ENCODE measurements at regions of chr9 and their contacts with region 1.

Region 1: DNA sequence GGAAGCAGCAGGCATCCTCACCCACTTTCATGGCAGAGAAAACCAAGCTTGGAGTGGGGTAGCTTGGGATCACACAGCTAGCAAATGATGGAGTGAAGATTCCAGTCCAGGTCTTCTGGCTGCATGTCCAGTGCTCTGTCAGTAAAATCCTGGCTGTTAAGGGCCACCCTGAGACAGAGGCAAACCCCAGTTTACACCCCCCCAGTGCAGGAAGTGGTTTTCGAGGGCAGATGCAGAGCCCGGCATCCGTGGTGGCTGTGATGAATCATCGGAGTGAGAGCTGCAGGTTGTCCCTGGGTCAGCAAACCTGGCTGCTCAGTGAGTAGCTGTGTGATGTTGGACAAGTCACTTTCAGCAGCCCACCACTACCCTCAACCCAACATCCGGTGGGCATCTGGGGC is 115.4 kb downstream of the RGS3 start:
- DNase-seq: peak; percentile 66
- ATAC-seq: no peak

Region 2: DNA sequence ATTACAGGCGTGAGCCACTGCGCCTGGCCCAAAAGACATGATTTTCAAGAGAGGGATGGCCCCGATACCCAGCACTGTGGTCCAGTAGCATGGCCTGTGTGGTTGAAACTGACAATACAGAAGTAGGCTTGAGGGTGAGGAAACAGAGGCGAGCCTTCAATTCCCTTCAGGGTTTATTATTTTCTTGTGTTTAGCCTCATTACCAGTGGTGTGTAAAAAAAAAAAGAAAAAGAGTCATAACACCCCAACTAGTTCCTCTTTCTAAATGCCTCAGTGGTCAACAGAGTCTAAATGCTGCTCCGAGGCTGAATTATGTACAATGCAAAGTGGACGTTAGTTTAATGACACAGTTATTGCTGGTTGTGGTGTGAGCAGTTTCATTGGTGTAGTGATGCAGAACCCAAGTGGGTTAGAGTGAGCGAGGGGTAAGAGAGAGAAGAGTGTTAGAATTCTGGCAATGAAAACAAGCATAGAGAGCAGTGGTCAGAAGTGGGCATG is 769.5 kb before region 1 on chr9:
- intact Hi-C with region 1: no loop called
- DNase-seq: no peak
- ATAC-seq: peak; percentile 29

Region 3: DNA sequence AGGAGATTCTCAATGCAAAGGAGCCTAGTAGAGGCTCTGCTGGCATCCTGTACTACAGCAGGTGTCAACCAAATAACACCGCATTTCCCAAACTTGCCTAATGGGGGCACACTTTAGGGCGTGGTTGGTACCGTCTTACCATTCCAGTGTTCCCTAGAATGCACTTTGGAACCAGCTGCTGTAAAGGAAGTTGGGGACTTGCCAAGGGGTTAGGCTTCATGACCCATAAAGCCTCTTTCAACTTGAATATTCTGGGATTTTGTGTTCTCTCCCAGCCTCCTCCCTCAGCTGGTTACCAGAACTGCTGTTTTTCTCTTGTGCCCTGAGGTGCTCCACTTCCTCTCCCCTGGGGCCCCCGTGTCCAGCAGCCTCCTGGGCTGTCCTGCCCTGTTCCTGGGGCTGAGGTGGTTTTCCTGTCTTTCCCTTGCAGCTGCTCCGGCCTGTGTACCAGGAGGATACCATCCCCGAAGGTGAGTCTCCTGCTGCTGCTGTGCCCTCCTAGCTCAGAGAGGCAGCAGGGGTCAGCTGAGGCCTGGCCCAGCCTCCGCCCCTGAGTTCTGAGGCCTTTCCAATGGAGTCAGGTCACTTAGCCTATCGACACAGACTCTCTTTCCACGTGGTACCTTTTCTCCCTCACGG is 70.7 kb before region 1 on chr9:
- intact Hi-C with region 1: loop called (anchors 5 kb)
- DNase-seq: no peak
- ATAC-seq: no peak

Region 4: GRCh38 chr9:113772121-113772810 is 193.4 kb after region 1 on chr9:
- intact Hi-C with region 1: no loop called
- DNase-seq: no peak
- ATAC-seq: peak; percentile 79

Region 5: GRCh38 chr9:114007991-114008666 is 429.2 kb after region 1 on chr9:
- intact Hi-C with region 1: no loop called
- DNase-seq: no peak
- ATAC-seq: no peak

Measured in Right ventricle myocardium superior (tissue), 1 donor.